T-cell (primary cell): ENCODE measurements at regions of chr1 and their contacts with region 1.

Region 1: GRCh38 chr1:38958967-38959366 is 17.3 kb upstream of the RHBDL2 start:
- DNase-seq: no peak
- ATAC-seq: no peak
- H3K4me3 ChIP-seq: no peak overlapping the region
- H3K4me3 Mint-ChIP-seq: no peak overlapping the region
- H3K27ac ChIP-seq: no peak overlapping the region
- H3K27ac Mint-ChIP-seq: no peak overlapping the region
- H3K4me1 ChIP-seq: no peaks in the 10 kb centered on the region
- H3K4me1 Mint-ChIP-seq: peaks cover 4 to 7% (median 4%) of the 10 kb centered on the region in 3 donors
- H3K27me3 ChIP-seq: no peaks in the 10 kb centered on the region
- H3K27me3 Mint-ChIP-seq: no peaks in the 10 kb centered on the region

Region 2: GRCh38 chr1:38875806-38876205 is 83.2 kb before region 1 on chr1:
- CTCF ChIA-PET with region 1: interaction called in 1 of 2 experiments, 12 read pairs
- POLR2A ChIA-PET with region 1: no interaction called
- DNase-seq: no peak
- ATAC-seq: no peak
- H3K4me3 ChIP-seq: no peak overlapping the region
- H3K4me3 Mint-ChIP-seq: no peak overlapping the region
- H3K27ac ChIP-seq: no peak overlapping the region
- H3K27ac Mint-ChIP-seq: no peak overlapping the region
- H3K4me1 ChIP-seq: peaks cover 11% of the 10 kb centered on the region in 2 experiments
- H3K4me1 Mint-ChIP-seq: peaks cover 17 to 30% (median 29%) of the 10 kb centered on the region in 3 donors
- H3K27me3 ChIP-seq: no peaks in the 10 kb centered on the region
- H3K27me3 Mint-ChIP-seq: no peaks in the 10 kb centered on the region

Region 3: DNA sequence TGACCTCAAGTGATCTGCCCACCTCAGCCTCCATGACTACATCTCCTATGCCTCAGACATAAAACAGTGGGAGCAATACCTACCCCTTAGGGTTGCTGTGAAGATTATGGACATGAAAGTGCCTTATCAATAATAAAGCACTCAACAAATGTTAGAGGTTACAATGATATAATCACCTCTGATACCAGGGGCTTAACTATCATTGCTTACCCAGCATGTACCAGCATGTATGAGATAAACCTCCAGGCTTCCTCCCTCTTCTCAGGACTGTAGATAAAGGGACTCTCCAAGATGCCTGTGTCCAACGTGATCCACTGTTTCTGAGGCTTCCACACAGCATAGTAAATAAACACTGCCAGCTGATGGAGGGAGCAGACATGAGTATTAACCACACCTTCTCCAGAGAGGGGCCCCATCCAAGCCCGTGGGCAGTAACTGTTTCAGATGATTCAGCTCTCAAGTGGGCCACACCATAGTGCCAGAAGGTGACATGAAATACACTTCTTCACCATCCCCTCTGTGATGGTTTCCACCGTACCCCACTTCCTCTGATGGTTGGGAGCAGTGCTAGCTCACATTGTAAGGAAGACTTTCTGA is 43.5 kb before region 1 on chr1:
- CTCF ChIA-PET with region 1: no interaction called
- POLR2A ChIA-PET with region 1: no interaction called
- DNase-seq: no peak
- ATAC-seq: no peak
- H3K4me3 ChIP-seq: no peak overlapping the region
- H3K4me3 Mint-ChIP-seq: no peak overlapping the region
- H3K27ac ChIP-seq: no peak overlapping the region
- H3K27ac Mint-ChIP-seq: no peak overlapping the region
- H3K4me1 ChIP-seq: no peaks in the 10 kb centered on the region
- H3K4me1 Mint-ChIP-seq: peaks cover 0 to 2% (median 0%) of the 10 kb centered on the region in 3 donors
- H3K27me3 ChIP-seq: no peaks in the 10 kb centered on the region
- H3K27me3 Mint-ChIP-seq: no peaks in the 10 kb centered on the region

Region 4: GRCh38 chr1:38941093-38941492 is 17.9 kb before region 1 on chr1:
- CTCF ChIA-PET with region 1: no interaction called
- POLR2A ChIA-PET with region 1: no interaction called
- DNase-seq: no peak
- ATAC-seq: no peak
- H3K4me3 ChIP-seq: no peak overlapping the region
- H3K4me3 Mint-ChIP-seq: no peak overlapping the region
- H3K27ac ChIP-seq: no peak overlapping the region
- H3K27ac Mint-ChIP-seq: no peak overlapping the region
- H3K4me1 ChIP-seq: no peaks in the 10 kb centered on the region
- H3K4me1 Mint-ChIP-seq: peaks cover 0 to 7% (median 3%) of the 10 kb centered on the region in 3 donors
- H3K27me3 ChIP-seq: peaks cover 0 to 7% of the 10 kb centered on the region in 2 experiments
- H3K27me3 Mint-ChIP-seq: no peaks in the 10 kb centered on the region